ENCODE measurements at regions of chr11 and their contacts with region 1.

Region 1: GRCh38 chr11:15801616-15802015 is 554.7 kb downstream of the SOX6 start:
- DNase-seq: no peak

Region 2: GRCh38 chr11:15841931-15842740 is 40.5 kb after region 1 on chr11:
- intact Hi-C with region 1: loop called in 1 of 2 experiments (anchors 1 kb)
- DNase-seq: no peak

Region 3: GRCh38 chr11:15893080-15893492 is 91.5 kb after region 1 on chr11:
- intact Hi-C with region 1: no loop called
- DNase-seq: no peak

Measured in posterior vena cava (tissue), 2 donors.